ENCODE measurements at regions of chr3 and their contacts with region 1.

Region 1: DNA sequence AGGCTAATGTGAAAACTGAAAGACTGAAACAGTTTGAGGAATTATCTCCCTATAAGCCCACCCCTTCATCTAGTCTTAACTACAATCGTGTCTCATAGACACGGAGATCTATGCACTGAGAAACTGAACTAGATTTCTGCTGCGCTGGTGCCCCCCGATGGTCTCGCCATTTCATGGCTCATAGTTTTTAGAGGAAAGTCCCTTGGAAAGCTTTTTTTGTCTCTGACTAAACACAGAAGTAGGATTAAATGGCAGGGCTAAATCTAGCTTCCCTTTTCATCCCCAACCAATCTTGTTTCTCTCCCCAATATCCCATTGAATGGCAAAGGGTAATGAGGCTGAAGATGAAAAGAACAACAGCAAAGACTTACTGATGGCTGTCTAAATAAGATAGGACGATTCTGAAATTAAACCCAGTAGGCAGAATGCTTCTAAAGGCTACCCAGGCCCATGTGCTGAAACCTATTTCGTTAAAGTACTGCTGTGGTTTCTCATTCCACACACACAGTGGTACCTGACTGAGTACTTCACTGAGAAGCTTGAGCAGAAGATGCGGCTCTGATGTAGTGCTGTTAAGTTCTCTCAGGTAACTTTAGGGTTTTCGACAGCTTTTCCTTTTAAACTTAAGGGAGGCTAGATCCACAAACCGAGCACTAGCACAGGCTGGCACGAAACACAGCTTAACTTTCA is 142.7 kb downstream of the GADL1 start:
- DNase-seq: peak; percentile 26 to 38
- ATAC-seq: peak in 5 of 8 donors; percentile 38 to 61 (median 50)
- H3K4me3 ChIP-seq: no peak overlapping the region
- H3K27ac ChIP-seq: no peak overlapping the region
- H3K4me1 ChIP-seq: peaks cover 0 to 28% (median 0%) of the 10 kb centered on the region in 9 donors
- H3K27me3 ChIP-seq: no peaks in the 10 kb centered on the region
- CTCF ChIP-seq: peak in 7 of 9 donors; percentile 13 to 64 (median 54)

Region 2: DNA sequence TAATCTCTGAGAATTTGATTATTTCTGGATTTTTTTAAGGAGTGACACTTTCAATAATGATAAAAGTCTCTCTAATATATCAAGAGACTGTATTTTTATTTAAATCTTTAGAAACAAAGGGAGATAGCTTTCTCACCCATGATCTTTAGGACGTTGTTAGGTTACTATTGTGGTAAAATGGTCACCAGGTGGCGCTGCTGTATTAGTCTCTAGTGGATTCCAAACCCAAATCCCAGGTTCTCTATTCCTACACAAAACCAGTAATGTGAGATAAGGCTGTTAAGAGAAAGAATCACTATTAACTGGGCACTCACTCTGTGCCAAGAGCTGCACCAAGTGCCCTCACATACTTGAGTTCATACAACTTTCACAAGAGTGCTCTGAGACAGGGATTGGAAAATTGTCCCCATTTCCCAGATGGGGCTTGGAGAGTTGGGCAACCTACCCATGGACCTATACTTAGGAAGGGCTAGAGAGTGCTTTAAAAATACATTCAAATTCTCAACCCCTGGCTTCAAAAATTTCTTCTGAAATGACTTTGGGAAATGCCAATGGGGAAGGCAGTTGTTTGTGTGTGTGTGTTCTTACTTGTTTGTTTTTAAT is 738.7 kb before region 1 on chr3:
- intact Hi-C with region 1: loop called in 2 of 10 experiments (anchors 10 kb)
- DNase-seq: peak in 1 of 2 donors; percentile 60
- ATAC-seq: peak in 5 of 8 donors; percentile 49 to 67 (median 52)
- H3K4me3 ChIP-seq: no peak overlapping the region
- H3K27ac ChIP-seq: no peak overlapping the region
- H3K4me1 ChIP-seq: peaks cover 0 to under 1% (median 0%) of the 10 kb centered on the region in 9 donors
- H3K27me3 ChIP-seq: no peaks in the 10 kb centered on the region
- CTCF ChIP-seq: peak; percentile 37 to 78 (median 71)

Region 3: DNA sequence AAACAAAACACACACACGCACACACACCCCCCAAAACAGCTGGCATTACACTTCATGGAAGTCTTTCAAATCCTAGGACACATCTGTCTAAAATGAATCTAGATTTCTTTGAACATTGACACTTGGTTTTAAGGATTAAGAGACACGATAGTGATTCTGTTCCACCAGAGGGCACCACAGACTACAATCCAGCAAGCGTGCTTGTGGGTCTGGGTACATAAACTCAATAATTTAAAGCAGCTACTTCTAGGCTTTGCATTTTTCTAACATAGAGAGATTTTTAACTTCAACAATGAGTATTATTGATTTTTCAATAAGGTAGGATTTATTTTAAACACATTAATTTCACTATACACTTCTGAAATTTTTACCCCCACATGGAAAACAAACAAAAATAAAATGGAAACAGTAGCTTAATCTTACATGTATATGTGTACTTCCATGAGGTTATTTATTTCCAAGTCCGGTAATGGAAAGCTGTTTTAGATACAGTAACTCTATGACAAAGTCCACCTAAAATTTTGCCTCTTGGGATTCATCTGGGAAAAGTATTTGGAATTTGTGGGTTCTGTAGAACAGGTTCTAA is 709.4 kb before region 1 on chr3:
- intact Hi-C with region 1: loop called in 9 of 10 experiments (anchors 2 to 10 kb)
- DNase-seq: peak in 1 of 2 donors; percentile 72
- ATAC-seq: peak in 6 of 8 donors; percentile 43 to 78 (median 64)
- H3K4me3 ChIP-seq: no peak overlapping the region
- H3K27ac ChIP-seq: no peak overlapping the region
- H3K4me1 ChIP-seq: peaks cover 0 to 21% (median 4%) of the 10 kb centered on the region in 9 donors
- H3K27me3 ChIP-seq: no peaks in the 10 kb centered on the region
- CTCF ChIP-seq: peak; percentile 54 to 85 (median 79)

Region 4: GRCh38 chr3:30112902-30113484 is 638.8 kb before region 1 on chr3:
- intact Hi-C with region 1: loop called in 5 of 10 experiments (anchors 2 to 5 kb)
- DNase-seq: no peak
- ATAC-seq: peak in 5 of 8 donors; percentile 12 to 55 (median 44)
- H3K4me3 ChIP-seq: no peak overlapping the region
- H3K27ac ChIP-seq: no peak overlapping the region
- H3K4me1 ChIP-seq: peaks cover 0 to 20% (median 8%) of the 10 kb centered on the region in 9 donors
- H3K27me3 ChIP-seq: no peaks in the 10 kb centered on the region
- CTCF ChIP-seq: peak; percentile 42 to 81 (median 71)

Region 5: GRCh38 chr3:30786365-30786764 is 34.6 kb after region 1 on chr3:
- intact Hi-C with region 1: no loop called
- DNase-seq: no peak
- ATAC-seq: no peak
- H3K4me3 ChIP-seq: no peak overlapping the region
- H3K27ac ChIP-seq: no peak overlapping the region
- H3K4me1 ChIP-seq: no peaks in the 10 kb centered on the region
- H3K27me3 ChIP-seq: no peaks in the 10 kb centered on the region
- CTCF ChIP-seq: no peak

Region 6: GRCh38 chr3:32531010-32531647 is 1779.4 kb after region 1 on chr3:
- intact Hi-C with region 1: no loop called
- DNase-seq: no peak
- ATAC-seq: no peak
- H3K4me3 ChIP-seq: no peak overlapping the region
- H3K27ac ChIP-seq: no peak overlapping the region
- H3K4me1 ChIP-seq: peaks cover 0 to 8% (median 0%) of the 10 kb centered on the region in 9 donors
- H3K27me3 ChIP-seq: no peaks in the 10 kb centered on the region
- CTCF ChIP-seq: no peak